Activated CD4-positive, alpha-beta T cell treated with anti-CD3 and anti-CD28 coated beads for 36 hours (primary cell): ENCODE measurements at regions of chr7 and their contacts with region 1.

Region 1: GRCh38 chr7:65373608-65374351 is at the start of gene ZNF92:
- DNase-seq: peak; percentile 97
- ATAC-seq: peak; percentile 99
- H3K4me3 Mint-ChIP-seq: peak within 1 kb of the TSS; percentile 96
- H3K27ac Mint-ChIP-seq: peak within 1 kb of the TSS; percentile 90
- H3K4me1 Mint-ChIP-seq: peaks cover 42% of the 10 kb centered on the region
- H3K27me3 Mint-ChIP-seq: no peaks in the 10 kb centered on the region
- total RNA-seq, gene ZNF92: 15.1 to 17.4 TPM

Region 2: DNA sequence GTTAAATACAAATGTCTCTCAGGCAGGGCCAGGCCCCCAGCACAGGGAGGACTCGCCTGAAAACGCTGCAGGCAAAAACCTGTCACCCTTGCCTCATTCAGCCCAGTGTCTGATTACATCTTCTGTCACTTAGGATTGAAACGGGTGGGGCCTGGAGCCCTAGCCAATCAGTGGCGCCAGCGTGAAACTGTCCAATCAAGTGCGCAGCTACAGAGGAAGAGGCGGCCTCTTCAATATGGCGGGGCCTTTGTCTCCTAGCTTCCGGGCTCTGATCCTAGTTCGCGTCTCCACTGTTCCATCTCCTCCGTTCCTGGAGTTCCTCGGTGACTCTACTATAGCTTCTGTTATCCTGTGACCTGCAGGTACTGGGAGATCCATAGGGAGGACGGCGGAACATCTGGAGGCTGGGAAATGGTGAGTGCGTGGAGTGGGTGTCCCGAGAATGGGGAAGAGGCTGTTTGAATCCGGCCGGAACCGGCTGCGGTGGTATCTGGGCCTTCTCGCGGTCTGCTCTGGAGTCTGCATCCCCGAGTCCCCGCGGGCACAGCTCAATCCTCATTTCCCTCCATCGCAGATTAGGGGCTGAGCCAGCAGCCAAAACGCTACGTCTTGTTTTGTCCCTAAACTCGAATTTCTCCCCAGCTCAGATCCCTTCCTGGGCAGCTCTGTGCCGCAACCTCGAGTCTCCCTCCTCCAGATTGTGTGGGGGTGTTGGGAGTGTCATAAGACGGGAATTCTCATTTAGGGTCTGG is 1059.9 kb before region 1 on chr7 and contains the start of gene ZNF736:
- CTCF ChIA-PET with region 1: no interaction called
- POLR2A ChIA-PET with region 1: no interaction called
- intact Hi-C with region 1: loop called in 1 of 2 experiments (anchors 5 kb)
- DNase-seq: peak; percentile 93
- ATAC-seq: peak; percentile 100
- H3K4me3 Mint-ChIP-seq: peak within 1 kb of the TSS; percentile 89
- H3K27ac Mint-ChIP-seq: peak within 1 kb of the TSS; percentile 99
- H3K4me1 Mint-ChIP-seq: peaks cover 30% of the 10 kb centered on the region
- H3K27me3 Mint-ChIP-seq: no peaks in the 10 kb centered on the region
- total RNA-seq, gene ZNF736: 23.5 to 25.5 TPM

Region 3: GRCh38 chr7:64794171-64794844 is 579.5 kb before region 1 on chr7 and contains the start of gene ZNF138:
- CTCF ChIA-PET with region 1: no interaction called
- POLR2A ChIA-PET with region 1: no interaction called
- intact Hi-C with region 1: loop called in 1 of 2 experiments (anchors 1 kb)
- DNase-seq: peak; percentile 97
- ATAC-seq: peak; percentile 100
- H3K4me3 Mint-ChIP-seq: peak within 1 kb of the TSS; percentile 97
- H3K27ac Mint-ChIP-seq: peak within 1 kb of the TSS; percentile 99
- H3K4me1 Mint-ChIP-seq: peaks cover 23% of the 10 kb centered on the region
- H3K27me3 Mint-ChIP-seq: no peaks in the 10 kb centered on the region
- total RNA-seq, gene ZNF138: 12.0 to 19.6 TPM

Region 4: DNA sequence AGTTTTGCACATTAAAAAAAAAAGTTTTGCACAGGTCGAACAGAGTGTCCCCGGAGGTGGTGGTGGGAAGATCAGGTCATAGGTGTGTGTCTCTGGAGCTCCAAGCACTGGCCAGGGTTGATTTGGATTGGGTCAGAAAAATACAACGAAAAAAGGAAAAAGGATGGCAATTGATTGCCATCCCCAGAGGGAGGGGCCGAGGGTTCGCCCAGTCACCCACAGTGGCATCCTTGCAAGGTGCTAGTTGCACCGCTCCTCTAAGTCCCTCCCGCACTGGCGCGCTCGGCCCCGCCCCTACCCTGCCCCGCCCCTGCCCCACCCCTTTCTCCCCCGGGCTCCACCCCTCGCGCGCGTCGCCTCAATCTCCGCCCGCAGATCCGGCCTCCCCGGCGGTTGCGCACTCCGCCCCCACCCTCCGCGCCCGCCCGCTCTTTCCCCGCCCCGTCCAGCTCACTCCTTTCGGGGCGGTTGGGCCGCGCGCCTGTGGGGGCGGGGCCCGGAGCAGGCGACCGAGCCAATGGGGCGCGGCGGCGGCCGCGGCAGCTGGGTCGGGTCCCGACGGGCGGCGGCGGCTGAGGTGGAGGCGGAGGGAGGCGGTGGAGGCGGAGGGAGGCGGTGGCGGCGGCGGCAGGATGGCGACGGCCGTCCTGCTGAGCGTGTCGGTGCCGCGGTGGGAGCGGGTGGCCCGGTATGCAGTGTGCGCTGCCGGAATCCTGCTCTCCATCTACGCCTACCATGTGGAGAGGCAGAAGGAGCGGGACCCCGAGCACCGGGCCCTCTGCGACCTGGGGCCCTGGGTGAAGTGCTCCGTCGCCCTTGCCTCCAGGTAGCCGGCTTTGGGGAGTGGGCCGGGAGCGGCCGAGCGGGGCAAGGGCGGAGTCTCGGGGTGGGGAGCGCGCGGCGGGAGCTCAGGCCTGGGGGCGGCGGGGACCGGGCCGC is 335.8 kb before region 1 on chr7:
- CTCF ChIA-PET with region 1: no interaction called
- POLR2A ChIA-PET with region 1: no interaction called
- intact Hi-C with region 1: loop called (anchors 1 to 5 kb)
- DNase-seq: peak; percentile 97
- ATAC-seq: peak; percentile 93
- H3K4me3 Mint-ChIP-seq: peak overlapping the region; percentile 82
- H3K27ac Mint-ChIP-seq: no peak overlapping the region
- H3K4me1 Mint-ChIP-seq: peaks cover 13% of the 10 kb centered on the region
- H3K27me3 Mint-ChIP-seq: no peaks in the 10 kb centered on the region

Region 5: DNA sequence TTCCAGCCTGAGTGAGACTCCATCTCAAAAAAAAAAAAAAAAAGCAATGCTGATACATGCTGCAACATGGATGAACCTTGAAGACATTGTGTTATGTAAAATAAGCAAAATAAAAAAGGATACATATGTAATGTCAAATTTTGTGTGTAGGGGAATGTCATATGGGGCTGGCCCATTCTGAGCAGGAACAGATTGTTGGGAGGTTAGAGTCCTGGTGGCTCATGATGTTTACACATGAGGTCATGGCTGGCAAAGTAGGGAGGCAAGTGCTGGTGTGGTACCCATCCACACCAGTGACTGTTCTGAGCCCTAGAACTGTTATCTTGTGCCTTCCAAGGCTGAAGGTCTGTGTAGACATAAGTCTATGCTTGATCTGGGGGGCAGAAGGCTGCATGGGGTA is 37.5 kb after region 1 on chr7:
- CTCF ChIA-PET with region 1: no interaction called
- POLR2A ChIA-PET with region 1: no interaction called
- intact Hi-C with region 1: no loop called
- DNase-seq: no peak
- ATAC-seq: no peak
- H3K4me3 Mint-ChIP-seq: no peak overlapping the region
- H3K27ac Mint-ChIP-seq: no peak overlapping the region
- H3K4me1 Mint-ChIP-seq: no peaks in the 10 kb centered on the region
- H3K27me3 Mint-ChIP-seq: peaks cover 3% of the 10 kb centered on the region

Region 6: GRCh38 chr7:65981965-65982792 is 608.4 kb after region 1 on chr7 and contains the start of gene GUSB:
- CTCF ChIA-PET with region 1: no interaction called
- POLR2A ChIA-PET with region 1: no interaction called
- intact Hi-C with region 1: loop called in 1 of 2 experiments (anchors 5 kb)
- DNase-seq: peak; percentile 95
- ATAC-seq: peak; percentile 90
- H3K4me3 Mint-ChIP-seq: peak within 1 kb of the TSS; percentile 80
- H3K27ac Mint-ChIP-seq: peak within 1 kb of the TSS; percentile 90
- H3K4me1 Mint-ChIP-seq: peaks cover 8% of the 10 kb centered on the region
- H3K27me3 Mint-ChIP-seq: no peaks in the 10 kb centered on the region
- total RNA-seq, gene GUSB: 41.8 to 43.2 TPM

Region 7: GRCh38 chr7:67302113-67303039 is 1928.6 kb after region 1 on chr7:
- CTCF ChIA-PET with region 1: no interaction called
- POLR2A ChIA-PET with region 1: no interaction called
- intact Hi-C with region 1: loop called in 1 of 2 experiments (anchors 5 kb)
- DNase-seq: peak; percentile 99
- ATAC-seq: peak; percentile 88
- H3K4me3 Mint-ChIP-seq: peak overlapping the region; percentile 88
- H3K27ac Mint-ChIP-seq: peak overlapping the region; percentile 92
- H3K4me1 Mint-ChIP-seq: peaks cover 18% of the 10 kb centered on the region
- H3K27me3 Mint-ChIP-seq: no peaks in the 10 kb centered on the region